ENCODE measurements at regions of chr3 and their contacts with region 1.

Region 1: DNA sequence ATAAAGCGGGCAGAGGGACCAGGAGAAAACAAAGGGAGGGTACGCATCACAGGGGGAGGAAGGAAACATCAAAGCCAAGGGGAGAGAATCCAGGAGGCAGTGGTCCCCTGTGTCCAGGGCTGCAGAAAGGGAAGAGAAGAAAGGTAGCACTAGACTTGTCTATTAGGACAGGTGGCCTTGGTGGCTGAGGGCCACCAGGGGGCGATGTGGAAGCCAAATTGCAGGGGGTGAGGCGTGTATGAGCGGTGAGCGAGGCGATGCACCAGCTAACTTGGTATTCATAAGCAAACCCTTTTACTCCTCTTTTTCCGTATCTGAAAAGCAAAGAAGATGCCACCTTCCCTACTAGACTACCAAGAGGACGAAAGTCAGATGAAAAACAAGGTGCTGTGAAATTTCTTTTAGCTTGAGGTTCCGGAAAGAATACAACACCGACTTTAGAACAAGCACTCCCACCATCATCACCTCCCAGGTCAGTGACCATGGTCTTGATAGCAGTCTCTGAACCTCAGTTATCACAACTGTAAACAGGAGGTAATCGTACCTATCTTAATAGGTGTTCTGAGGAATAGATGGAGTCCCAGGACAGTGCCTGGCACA is 654.4 kb upstream of the ADAMTS9 start:
- DNase-seq: no peak
- H3K4me3 ChIP-seq: no peak overlapping the region
- H3K27me3 ChIP-seq: no peaks in the 10 kb centered on the region
- CTCF ChIP-seq: peak; percentile 79

Region 2: GRCh38 chr3:65330072-65330471 is 12.1 kb before region 1 on chr3:
- CTCF ChIA-PET with region 1: interaction called, 14 read pairs
- POLR2A ChIA-PET with region 1: no interaction called
- DNase-seq: no peak
- H3K4me3 ChIP-seq: no peak overlapping the region
- H3K27me3 ChIP-seq: peaks cover 2% of the 10 kb centered on the region; the same call in 1 of the 2 replicates
- CTCF ChIP-seq: no peak